ENCODE measurements at regions of chr4 and their contacts with region 1.

Region 1: GRCh38 chr4:89365776-89366175 is 58.2 kb upstream of the GPRIN3 start:
- DNase-seq: no peak
- H3K4me3 Mint-ChIP-seq: no peak overlapping the region
- H3K27ac Mint-ChIP-seq: no peak overlapping the region
- H3K4me1 Mint-ChIP-seq: peaks cover 14% of the 10 kb centered on the region
- H3K27me3 Mint-ChIP-seq: peaks cover 1% of the 10 kb centered on the region

Region 2: DNA sequence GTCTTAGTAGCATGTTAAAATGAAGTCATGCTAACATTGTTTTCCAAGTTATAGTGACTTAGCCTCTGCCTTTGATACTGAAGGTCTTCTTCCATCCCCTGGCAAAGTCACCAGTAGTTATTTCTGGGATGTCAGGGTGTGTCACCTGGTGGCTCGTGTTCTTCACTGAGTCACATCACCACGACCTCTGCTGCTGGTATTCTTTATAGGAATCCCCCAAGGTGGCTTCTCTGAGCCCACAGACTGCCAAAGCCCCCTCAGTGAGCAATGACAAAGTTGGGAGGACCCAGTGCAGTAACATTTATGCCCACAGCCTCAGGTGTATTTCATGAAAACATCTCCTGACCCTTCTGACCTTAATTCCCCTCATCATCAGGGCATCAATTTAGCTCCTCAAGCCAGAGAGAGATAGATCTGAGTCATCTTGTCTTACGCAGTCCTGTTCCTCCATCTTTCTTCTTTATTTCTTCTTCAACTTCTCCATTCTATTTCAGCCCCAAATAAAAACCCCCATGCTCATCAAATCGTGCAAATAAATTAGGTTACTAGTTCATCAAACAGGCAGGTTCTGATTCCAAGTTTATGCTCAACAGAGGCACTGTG is 28.9 kb before region 1 on chr4:
- intact Hi-C with region 1: loop called (anchors 2 kb)
- DNase-seq: no peak
- H3K4me3 Mint-ChIP-seq: no peak overlapping the region
- H3K27ac Mint-ChIP-seq: no peak overlapping the region
- H3K4me1 Mint-ChIP-seq: peaks cover 8% of the 10 kb centered on the region
- H3K27me3 Mint-ChIP-seq: peaks cover 19% of the 10 kb centered on the region

Region 3: GRCh38 chr4:89411539-89412309 is 45.9 kb after region 1 on chr4:
- intact Hi-C with region 1: no loop called
- DNase-seq: no peak
- H3K4me3 Mint-ChIP-seq: no peak overlapping the region
- H3K27ac Mint-ChIP-seq: no peak overlapping the region
- H3K4me1 Mint-ChIP-seq: peaks cover 1% of the 10 kb centered on the region
- H3K27me3 Mint-ChIP-seq: no peaks in the 10 kb centered on the region